Activated CD4-positive, alpha-beta memory T cell treated with anti-CD3 and anti-CD28 coated beads, Interleukin-2, amount 10 ng/mL, durations not matched to agents 7 days and 5 days (primary cell): ENCODE measurements at regions of chr15 and their contacts with region 1.

Region 1: DNA sequence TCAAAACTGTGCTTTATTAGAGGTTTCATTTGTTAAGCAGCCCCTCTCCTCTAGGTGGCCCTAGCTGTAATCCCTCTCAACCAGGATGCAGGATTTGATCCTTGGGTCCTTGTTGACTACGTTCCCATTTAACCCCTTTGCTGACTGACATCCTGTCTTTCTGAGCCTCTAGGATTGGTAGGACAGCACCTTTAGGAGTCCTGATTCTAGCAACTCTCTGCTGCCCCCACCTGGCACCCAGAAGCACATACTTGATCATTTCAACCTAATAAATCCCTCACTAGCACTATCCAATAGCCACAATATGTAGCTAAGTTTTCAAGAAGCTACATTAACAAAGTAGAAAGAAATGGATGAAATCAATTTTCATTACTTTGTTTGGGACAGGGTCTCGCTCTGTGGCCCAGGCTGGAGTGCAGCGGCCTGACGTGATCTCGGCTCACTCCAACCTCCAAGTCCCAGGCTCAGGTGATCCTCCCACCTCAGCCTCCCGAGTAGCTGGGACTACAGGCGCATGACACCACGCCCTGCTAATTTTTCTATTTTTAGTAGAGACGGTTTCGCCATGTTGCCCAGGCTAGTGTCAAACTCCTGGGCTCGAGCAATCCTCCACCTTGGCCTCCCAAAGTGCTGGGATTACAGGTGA is 28.3 kb downstream of the RSL24D1 start:
- DNase-seq: peak; percentile 59
- H3K4me3 Mint-ChIP-seq: no peak overlapping the region
- H3K27ac Mint-ChIP-seq: no peak overlapping the region
- H3K4me1 Mint-ChIP-seq: peaks cover 2% of the 10 kb centered on the region
- H3K27me3 Mint-ChIP-seq: no peaks in the 10 kb centered on the region

Region 2: GRCh38 chr15:55179141-55179540 is 10.7 kb after region 1 on chr15:
- CTCF ChIA-PET with region 1: interaction called, 12 read pairs
- POLR2A ChIA-PET with region 1: interaction called, 3 read pairs
- DNase-seq: no peak
- H3K4me3 Mint-ChIP-seq: no peak overlapping the region
- H3K27ac Mint-ChIP-seq: no peak overlapping the region
- H3K4me1 Mint-ChIP-seq: peaks cover 3% of the 10 kb centered on the region
- H3K27me3 Mint-ChIP-seq: no peaks in the 10 kb centered on the region